A549 (cell line): ENCODE measurements at regions of chr3 and their contacts with region 1.

Region 1: GRCh38 chr3:146189519-146190173 is 28.7 kb upstream of the PLOD2 start:
- DNase-seq: peak; percentile 42 to 72
- ATAC-seq: peak; percentile 81 to 94
- H3K4me3 ChIP-seq: peak overlapping the region; percentile 24; the same call in 1 of the 3 replicates
- H3K27ac ChIP-seq: peak overlapping the region; percentile 56 to 65; a peak in 4 of 6 replicates
- H3K4me1 ChIP-seq: peaks cover 33% of the 10 kb centered on the region
- CTCF ChIP-seq: peak; percentile 86
- EP300 ChIP-seq: no peak
- POLR2A ChIP-seq: no peak
- RAD21 ChIP-seq: peak; percentile 81 to 86

Region 2: DNA sequence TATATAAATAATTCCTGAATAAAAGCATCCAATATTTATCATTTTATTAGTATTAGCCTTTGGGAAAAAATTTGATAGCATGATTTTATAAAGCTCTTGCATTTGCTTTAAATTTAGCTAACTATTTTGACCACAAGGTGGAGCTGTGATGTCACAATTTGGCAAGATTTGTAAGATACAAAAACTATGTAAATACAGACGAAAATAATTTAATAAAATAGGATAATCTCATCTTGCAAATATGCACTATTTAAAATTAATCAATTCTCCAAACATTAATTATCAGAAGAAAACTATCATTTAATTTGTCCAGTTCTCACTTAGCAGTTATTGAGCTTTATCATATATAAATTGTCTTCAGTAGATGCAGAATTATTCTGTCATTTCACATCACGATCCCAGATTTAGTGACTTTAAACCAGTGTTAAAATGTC is 124.1 kb before region 1 on chr3:
- CTCF ChIA-PET with region 1: interaction called, 63 read pairs
- POLR2A ChIA-PET with region 1: interaction called, 9 read pairs
- DNase-seq: peak in 1 of 2 experiments; percentile 73
- ATAC-seq: no peak
- H3K4me3 ChIP-seq: no peak overlapping the region
- H3K27ac ChIP-seq: no peak overlapping the region
- H3K4me1 ChIP-seq: peaks cover 29% of the 10 kb centered on the region
- CTCF ChIP-seq: peak; percentile 95
- EP300 ChIP-seq: no peak
- POLR2A ChIP-seq: no peak
- RAD21 ChIP-seq: peak; percentile 86 to 93

Region 3: DNA sequence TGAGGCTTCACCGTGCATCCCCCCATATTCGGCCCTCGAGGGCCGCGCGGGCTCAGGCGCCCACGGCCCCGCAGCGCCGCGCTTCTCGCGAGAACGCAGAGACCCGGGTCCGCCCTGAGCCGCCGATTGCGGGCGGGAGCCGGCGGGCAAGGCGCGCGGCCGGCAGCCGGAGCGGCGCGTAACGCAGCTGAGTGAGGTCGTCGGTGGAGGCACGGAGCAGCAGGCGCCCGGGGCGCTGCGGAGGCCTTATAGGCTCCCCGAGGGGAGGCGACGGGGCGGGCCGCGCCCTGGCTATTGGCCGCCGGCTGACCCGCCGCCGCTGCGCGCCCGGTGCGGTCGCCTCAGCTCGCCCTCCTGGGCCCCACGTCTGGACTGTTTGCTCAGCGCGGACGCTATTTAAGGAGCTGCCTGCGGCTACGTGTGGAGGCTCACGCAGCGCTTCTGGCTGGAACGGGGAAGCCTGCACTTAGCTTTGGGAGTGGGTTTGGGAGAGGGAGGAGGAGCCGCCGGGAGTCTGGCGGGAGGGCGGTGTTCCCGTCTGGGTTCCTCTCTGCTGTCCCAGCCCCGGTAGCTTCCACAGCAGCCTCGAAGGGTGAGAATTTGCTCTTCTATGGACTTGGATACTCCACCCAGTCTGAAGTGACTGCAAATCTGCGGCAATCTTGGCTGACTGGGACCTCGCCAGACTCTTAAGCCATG is 28.5 kb before region 1 on chr3 and contains the start of gene PLOD2:
- CTCF ChIA-PET with region 1: interaction called, 21 read pairs
- POLR2A ChIA-PET with region 1: interaction called, 18 read pairs
- DNase-seq: peak; percentile 56 to 89
- ATAC-seq: peak; percentile 75 to 76
- H3K4me3 ChIP-seq: peak within 1 kb of the TSS; percentile 90
- H3K27ac ChIP-seq: peak within 1 kb of the TSS; percentile 87 to 97
- H3K4me1 ChIP-seq: peaks cover 64% of the 10 kb centered on the region
- CTCF ChIP-seq: no peak; the same call in 2 of the 3 replicates
- EP300 ChIP-seq: peak in 1 of 2 experiments; percentile 20; a peak in 1 of 5 replicates
- POLR2A ChIP-seq: peak; percentile 86
- RAD21 ChIP-seq: no peak; a peak in 2 of 5 replicates
- polyA plus RNA-seq, gene PLOD2: 161 and 174 TPM in 2 replicates

Region 4: GRCh38 chr3:146203776-146204175 is 14.1 kb after region 1 on chr3:
- CTCF ChIA-PET with region 1: interaction called, 14 read pairs
- POLR2A ChIA-PET with region 1: no interaction called
- DNase-seq: no peak
- ATAC-seq: no peak
- H3K4me3 ChIP-seq: no peak overlapping the region
- H3K27ac ChIP-seq: no peak overlapping the region
- H3K4me1 ChIP-seq: no peaks in the 10 kb centered on the region
- CTCF ChIP-seq: no peak
- EP300 ChIP-seq: no peak
- POLR2A ChIP-seq: no peak
- RAD21 ChIP-seq: no peak

Region 5: GRCh38 chr3:146382386-146382785 is 192.7 kb after region 1 on chr3:
- CTCF ChIA-PET with region 1: interaction called, 11 read pairs
- POLR2A ChIA-PET with region 1: no interaction called
- DNase-seq: peak; percentile 13 to 65
- ATAC-seq: peak; percentile 88 to 90; a peak in 5 of 6 replicates
- H3K4me3 ChIP-seq: no peak overlapping the region
- H3K27ac ChIP-seq: no peak overlapping the region
- H3K4me1 ChIP-seq: peaks cover 8% of the 10 kb centered on the region
- CTCF ChIP-seq: peak; percentile 48
- EP300 ChIP-seq: no peak
- POLR2A ChIP-seq: no peak
- RAD21 ChIP-seq: peak; percentile 71 to 79